CD4-positive, alpha-beta memory T cell (primary cell): ENCODE measurements at regions of chr3 and their contacts with region 1.

Region 1: GRCh38 chr3:128787256-128788240 is 61.6 kb downstream of the RAB7A start:
- DNase-seq: peak; percentile 39 to 77 (median 43)
- H3K4me3 ChIP-seq: peak overlapping the region; percentile 0 to 57
- H3K4me3 Mint-ChIP-seq: peak overlapping the region; percentile 53 to 90 (median 84)
- H3K27ac ChIP-seq: peak overlapping the region; percentile 48
- H3K27ac Mint-ChIP-seq: peak overlapping the region; percentile 89 to 98 (median 94)
- H3K4me1 ChIP-seq: peaks cover 79% of the 10 kb centered on the region
- H3K4me1 Mint-ChIP-seq: peaks cover 56 to 87% (median 72%) of the 10 kb centered on the region in 4 donors
- H3K27me3 ChIP-seq: no peaks in the 10 kb centered on the region
- H3K27me3 Mint-ChIP-seq: no peaks in the 10 kb centered on the region

Region 2: DNA sequence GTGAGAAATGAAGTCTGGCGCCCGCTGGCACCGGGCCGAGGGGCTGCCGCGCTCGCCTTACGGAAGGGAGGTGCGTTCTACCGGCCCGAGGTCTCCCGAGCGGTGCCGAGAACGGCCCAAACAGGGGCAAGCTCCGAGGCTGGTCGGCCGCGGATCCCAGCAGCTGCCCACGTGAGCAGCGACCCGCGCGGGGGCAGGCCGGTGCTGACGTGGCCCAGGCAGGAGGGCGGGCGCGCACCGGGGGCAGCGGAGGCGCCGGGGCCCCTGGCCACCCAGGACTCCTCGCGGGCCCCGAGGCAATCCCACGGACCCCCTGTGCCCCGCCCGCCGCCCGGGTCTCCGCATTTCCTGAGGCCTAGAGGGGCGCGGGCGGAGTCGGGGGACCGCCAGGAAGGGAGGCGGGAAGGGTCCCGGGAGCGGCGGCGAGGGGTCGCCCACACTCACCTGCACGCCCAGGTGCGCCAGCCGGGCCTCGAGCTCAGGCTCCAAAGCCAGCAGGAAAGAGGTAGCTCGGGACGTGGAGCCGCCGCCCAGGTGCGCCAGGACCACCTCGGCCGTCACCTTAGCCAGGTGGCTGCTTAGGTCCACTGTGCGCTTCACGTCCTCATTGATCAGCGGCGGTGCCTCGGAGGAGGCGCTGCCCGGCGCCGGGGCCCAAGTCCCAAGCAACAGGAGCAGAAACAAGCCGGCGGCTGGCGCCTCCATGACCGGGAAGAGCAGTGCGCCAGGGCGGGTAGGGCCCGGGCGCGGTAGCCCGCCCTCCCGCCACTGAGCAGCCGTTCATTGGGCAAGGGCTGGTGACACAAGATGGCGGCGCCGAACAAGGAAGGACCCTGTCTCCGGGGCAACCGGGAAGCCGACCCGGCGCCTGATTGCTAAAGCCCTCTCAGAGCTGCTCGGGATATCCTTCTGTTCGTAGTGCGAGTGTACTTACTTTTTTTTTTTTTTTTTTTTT is 137.2 kb before region 1 on chr3 and contains the start of gene RPN1:
- CTCF ChIA-PET with region 1: interaction called, 3 read pairs
- POLR2A ChIA-PET with region 1: interaction called, 11 read pairs
- intact Hi-C with region 1: no loop called
- DNase-seq: peak; percentile 96 to 99 (median 97)
- H3K4me3 ChIP-seq: peak within 1 kb of the TSS; percentile 84 to 89
- H3K4me3 Mint-ChIP-seq: peak within 1 kb of the TSS; percentile 85 to 94 (median 88)
- H3K27ac ChIP-seq: peak within 1 kb of the TSS; percentile 92
- H3K27ac Mint-ChIP-seq: peak within 1 kb of the TSS; percentile 88 to 96 (median 93)
- H3K4me1 ChIP-seq: peaks cover 26% of the 10 kb centered on the region
- H3K4me1 Mint-ChIP-seq: peaks cover 24 to 54% (median 34%) of the 10 kb centered on the region in 4 donors
- H3K27me3 ChIP-seq: no peaks in the 10 kb centered on the region
- H3K27me3 Mint-ChIP-seq: no peaks in the 10 kb centered on the region
- total RNA-seq, gene RPN1: 121 to 127 TPM

Region 3: GRCh38 chr3:128714887-128715491 is 72.6 kb before region 1 on chr3:
- CTCF ChIA-PET with region 1: interaction called, 4 read pairs
- POLR2A ChIA-PET with region 1: interaction called, 15 read pairs
- intact Hi-C with region 1: no loop called
- DNase-seq: peak; percentile 38 to 64 (median 47)
- H3K4me3 ChIP-seq: no peak overlapping the region
- H3K4me3 Mint-ChIP-seq: peak overlapping the region in 6 of 8 donors; percentile 41 to 80 (median 67)
- H3K27ac ChIP-seq: no peak overlapping the region
- H3K27ac Mint-ChIP-seq: peak overlapping the region; percentile 58 to 92 (median 91)
- H3K4me1 ChIP-seq: peaks cover 12% of the 10 kb centered on the region
- H3K4me1 Mint-ChIP-seq: peaks cover 9 to 18% (median 13%) of the 10 kb centered on the region in 4 donors
- H3K27me3 ChIP-seq: no peaks in the 10 kb centered on the region
- H3K27me3 Mint-ChIP-seq: no peaks in the 10 kb centered on the region

Region 4: GRCh38 chr3:128804017-128804810 is 16.7 kb after region 1 on chr3:
- CTCF ChIA-PET with region 1: interaction called, 12 read pairs
- POLR2A ChIA-PET with region 1: interaction called, 39 read pairs
- intact Hi-C with region 1: loop called (anchors 2 kb)
- DNase-seq: peak; percentile 77 to 85 (median 81)
- H3K4me3 ChIP-seq: peak overlapping the region; percentile 26 to 45
- H3K4me3 Mint-ChIP-seq: peak overlapping the region; percentile 78 to 89 (median 84)
- H3K27ac ChIP-seq: peak overlapping the region; percentile 81
- H3K27ac Mint-ChIP-seq: peak overlapping the region; percentile 90 to 97 (median 95)
- H3K4me1 ChIP-seq: peaks cover 68% of the 10 kb centered on the region
- H3K4me1 Mint-ChIP-seq: peaks cover 54 to 78% (median 67%) of the 10 kb centered on the region in 4 donors
- H3K27me3 ChIP-seq: no peaks in the 10 kb centered on the region
- H3K27me3 Mint-ChIP-seq: no peaks in the 10 kb centered on the region

Region 5: DNA sequence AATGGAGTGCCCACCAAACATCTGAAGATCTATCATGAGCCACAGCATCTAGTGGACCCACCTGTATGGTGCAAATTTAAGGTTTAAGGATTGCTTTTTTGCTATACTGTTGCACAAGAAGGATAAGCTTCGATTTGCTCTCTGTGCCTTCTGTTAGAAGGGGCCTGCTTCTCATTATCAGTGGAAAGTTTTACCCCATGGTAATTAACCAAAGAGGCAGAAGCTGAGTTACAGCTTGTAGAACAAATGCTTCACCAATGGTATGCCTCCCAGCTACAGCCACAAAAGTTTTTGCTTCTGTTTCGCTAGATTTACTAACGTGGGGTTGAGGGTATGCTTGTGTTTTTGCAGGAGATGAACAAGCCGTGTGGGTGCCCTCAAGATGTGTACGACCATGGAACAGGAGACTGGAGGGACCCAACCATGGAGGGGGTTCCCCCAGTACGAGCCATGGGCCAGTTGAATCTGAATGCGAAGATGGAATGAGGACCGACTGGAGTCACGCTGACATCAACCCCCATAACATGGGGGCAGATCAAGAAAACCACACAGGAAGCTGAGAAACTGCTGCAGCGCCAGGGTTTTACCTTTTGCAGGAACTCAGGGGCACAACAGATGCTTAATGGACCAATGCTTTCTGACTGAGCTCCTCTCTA is 135.4 kb after region 1 on chr3:
- CTCF ChIA-PET with region 1: interaction called, 4 read pairs
- POLR2A ChIA-PET with region 1: interaction called, 4 read pairs
- intact Hi-C with region 1: loop called (anchors 1 kb)
- DNase-seq: peak; percentile 55 to 64 (median 57)
- H3K4me3 ChIP-seq: peak overlapping the region; percentile 29 to 74
- H3K4me3 Mint-ChIP-seq: peak overlapping the region; percentile 82 to 90 (median 85)
- H3K27ac ChIP-seq: no peak overlapping the region
- H3K27ac Mint-ChIP-seq: peak overlapping the region; percentile 70 to 91 (median 88)
- H3K4me1 ChIP-seq: peaks cover 20% of the 10 kb centered on the region
- H3K4me1 Mint-ChIP-seq: peaks cover 26 to 45% (median 37%) of the 10 kb centered on the region in 4 donors
- H3K27me3 ChIP-seq: no peaks in the 10 kb centered on the region
- H3K27me3 Mint-ChIP-seq: no peaks in the 10 kb centered on the region